ENCODE measurements at regions of chr14 and their contacts with region 1.

Region 1: GRCh38 chr14:24806061-24806678 is 172.2 kb upstream of the GZMB start:
- DNase-seq: no peak
- ATAC-seq: no peak
- H3K4me3 ChIP-seq: no peak overlapping the region
- H3K27ac ChIP-seq: no peak overlapping the region
- H3K4me1 ChIP-seq: no peaks in the 10 kb centered on the region
- H3K27me3 ChIP-seq: no peaks in the 10 kb centered on the region
- CTCF ChIP-seq: peak; percentile 11 to 62 (median 48); a peak in 4 of 6 replicates
- POLR2A ChIP-seq: no peak
- RAD21 ChIP-seq: peak; percentile 28; the same call in 1 of the 2 replicates

Region 2: GRCh38 chr14:24843494-24843893 is 37.3 kb after region 1 on chr14:
- CTCF ChIA-PET with region 1: no interaction called
- POLR2A ChIA-PET with region 1: no interaction called
- RAD21 ChIA-PET with region 1: no interaction called
- intact Hi-C with region 1: no loop called
- DNase-seq: no peak
- ATAC-seq: no peak
- H3K4me3 ChIP-seq: no peak overlapping the region
- H3K27ac ChIP-seq: no peak overlapping the region
- H3K4me1 ChIP-seq: no peaks in the 10 kb centered on the region
- H3K27me3 ChIP-seq: no peaks in the 10 kb centered on the region
- CTCF ChIP-seq: no peak
- POLR2A ChIP-seq: no peak
- RAD21 ChIP-seq: no peak

Region 3: DNA sequence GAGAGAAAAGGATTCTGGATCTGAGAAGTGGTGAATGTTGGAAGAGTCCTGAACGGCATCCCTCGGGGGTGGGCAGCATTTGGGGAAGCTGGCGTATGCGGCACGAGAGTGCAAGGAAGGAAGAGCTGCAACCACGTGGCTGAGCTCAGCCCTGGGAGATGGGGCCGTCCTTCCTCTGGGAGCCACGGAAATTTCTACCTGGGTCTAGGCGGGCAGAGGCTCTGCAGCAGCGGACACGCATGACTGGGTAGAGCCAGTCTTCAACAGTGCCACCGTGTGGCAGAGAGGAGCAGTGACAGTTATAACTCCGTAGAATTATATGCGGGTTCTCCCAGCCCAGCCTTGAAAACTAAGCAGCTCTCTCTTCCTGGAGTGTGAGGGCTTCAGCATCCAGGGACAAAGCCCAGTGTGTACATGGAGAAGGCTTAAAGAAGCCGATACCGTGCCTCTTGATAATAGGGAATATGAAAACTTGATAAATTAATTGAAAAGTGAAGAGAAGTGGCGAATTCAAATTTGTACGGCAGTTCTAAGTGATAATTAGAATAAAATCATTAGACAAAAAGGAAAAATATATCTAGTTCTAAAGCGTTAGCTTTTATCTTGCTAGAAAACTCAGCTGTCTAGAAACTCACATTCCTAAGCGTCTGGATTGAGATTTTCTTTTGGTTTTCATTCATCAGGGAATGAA is 326.7 kb after region 1 on chr14:
- CTCF ChIA-PET with region 1: no interaction called
- POLR2A ChIA-PET with region 1: no interaction called
- RAD21 ChIA-PET with region 1: no interaction called
- intact Hi-C with region 1: loop called (anchors 2 kb)
- DNase-seq: no peak
- ATAC-seq: peak; percentile 55
- H3K4me3 ChIP-seq: no peak overlapping the region
- H3K27ac ChIP-seq: no peak overlapping the region
- H3K4me1 ChIP-seq: no peaks in the 10 kb centered on the region
- H3K27me3 ChIP-seq: no peaks in the 10 kb centered on the region
- CTCF ChIP-seq: peak in 2 of 3 experiments; percentile 36 to 56; a peak in 4 of 6 replicates
- POLR2A ChIP-seq: no peak
- RAD21 ChIP-seq: no peak

Region 4: GRCh38 chr14:25150934-25151790 is 345.0 kb after region 1 on chr14:
- CTCF ChIA-PET with region 1: no interaction called
- POLR2A ChIA-PET with region 1: no interaction called
- RAD21 ChIA-PET with region 1: no interaction called
- intact Hi-C with region 1: loop called (anchors 5 kb)
- DNase-seq: peak; percentile 6
- ATAC-seq: no peak
- H3K4me3 ChIP-seq: no peak overlapping the region
- H3K27ac ChIP-seq: no peak overlapping the region
- H3K4me1 ChIP-seq: no peaks in the 10 kb centered on the region
- H3K27me3 ChIP-seq: no peaks in the 10 kb centered on the region
- CTCF ChIP-seq: peak; percentile 11 to 66 (median 61); a peak in 4 of 6 replicates
- POLR2A ChIP-seq: no peak
- RAD21 ChIP-seq: peak; percentile 21; the same call in 1 of the 2 replicates

Measured in HCT116 (cell line).